ENCODE measurements at regions of chr9 and their contacts with region 1.

Region 1: DNA sequence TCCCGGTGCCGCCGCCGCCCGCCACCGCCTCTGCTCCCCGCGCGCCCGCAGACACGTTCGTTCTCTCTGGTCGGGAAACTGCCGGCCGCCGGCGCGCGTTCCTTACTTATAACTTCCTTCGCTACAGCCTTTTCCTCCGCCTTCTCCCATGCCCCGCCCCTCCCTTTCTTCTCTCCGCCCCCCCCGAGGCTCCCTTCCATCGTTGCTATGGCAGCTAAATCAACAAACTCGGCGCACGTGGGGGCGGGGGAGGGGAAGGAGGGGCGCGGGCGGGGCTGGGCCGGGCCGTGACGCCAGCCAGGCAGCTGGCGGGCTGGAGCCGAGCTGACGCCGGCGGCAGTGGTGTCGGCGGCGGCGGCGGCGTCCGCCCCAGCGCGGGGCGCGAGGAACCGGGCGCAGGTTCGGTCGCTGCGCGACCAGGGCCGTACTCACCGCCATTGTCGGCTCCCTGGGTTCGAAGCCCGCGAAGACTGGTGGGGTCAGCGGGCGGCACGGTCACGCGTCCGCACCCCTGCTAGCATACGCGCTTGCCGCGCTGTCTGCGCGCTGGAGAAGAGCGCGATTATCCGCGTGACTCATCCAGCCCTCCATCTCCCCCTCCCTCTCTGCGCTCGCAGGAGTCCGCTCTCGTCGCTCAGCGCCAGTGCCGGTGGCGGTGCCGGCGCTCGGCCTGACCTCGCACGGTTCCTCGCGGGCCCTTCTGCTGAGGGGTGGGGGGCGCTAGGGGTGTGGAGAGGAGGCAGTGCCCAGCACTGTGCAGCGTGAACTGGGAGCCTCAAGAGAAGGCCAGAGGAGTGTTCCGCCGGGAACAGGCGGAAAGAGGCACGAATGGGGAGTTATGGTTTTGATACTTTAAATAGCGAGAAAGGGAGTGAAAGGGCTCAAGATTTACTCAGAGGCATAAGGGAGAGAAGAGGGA is at the start of gene KLF4:
- DNase-seq: peak; percentile 91 to 95 (median 95)
- H3K4me3 ChIP-seq: peak within 1 kb of the TSS; percentile 64
- H3K27ac ChIP-seq: peak within 1 kb of the TSS; percentile 69 to 83
- H3K4me1 ChIP-seq: peaks cover 2% of the 10 kb centered on the region
- H3K27me3 ChIP-seq: no peaks in the 10 kb centered on the region
- CTCF ChIP-seq: peak in 2 of 3 donors; percentile 14 to 45
- EP300 ChIP-seq: peak; percentile 27
- POLR2A ChIP-seq: peak; percentile 95
- total RNA-seq, gene KLF4: 29.2 to 138 (median 71.2) TPM

Region 2: GRCh38 chr9:107067739-107068416 is 422.1 kb before region 1 on chr9:
- intact Hi-C with region 1: no loop called
- DNase-seq: no peak
- H3K4me3 ChIP-seq: no peak overlapping the region
- H3K27ac ChIP-seq: no peak overlapping the region
- H3K4me1 ChIP-seq: no peaks in the 10 kb centered on the region
- H3K27me3 ChIP-seq: no peaks in the 10 kb centered on the region
- CTCF ChIP-seq: no peak
- EP300 ChIP-seq: no peak
- POLR2A ChIP-seq: no peak

Region 3: DNA sequence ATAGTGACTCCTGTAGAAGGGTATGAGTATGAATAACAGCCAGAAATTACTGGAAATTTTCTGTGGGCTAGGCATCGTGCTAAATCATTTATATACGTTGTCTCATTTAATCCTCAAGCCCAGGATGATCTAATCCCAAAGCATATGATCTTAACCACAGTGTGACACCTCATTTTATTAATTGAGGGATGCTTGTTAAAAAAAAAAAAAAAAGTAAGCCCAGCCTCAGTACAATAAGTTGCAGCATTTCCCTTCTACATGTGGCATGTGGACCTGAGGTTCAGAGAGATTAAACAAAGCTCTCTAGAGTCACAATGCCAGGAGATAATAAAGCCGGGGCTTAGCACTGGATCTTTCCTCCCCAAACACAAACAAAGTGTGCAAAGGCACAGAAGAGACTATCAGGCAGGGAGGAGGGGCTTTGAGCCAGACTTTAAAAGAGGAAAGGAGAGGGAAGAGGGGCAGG is 49.9 kb before region 1 on chr9:
- intact Hi-C with region 1: no loop called
- DNase-seq: no peak
- H3K4me3 ChIP-seq: no peak overlapping the region
- H3K27ac ChIP-seq: no peak overlapping the region
- H3K4me1 ChIP-seq: no peaks in the 10 kb centered on the region
- H3K27me3 ChIP-seq: no peaks in the 10 kb centered on the region
- CTCF ChIP-seq: no peak
- EP300 ChIP-seq: no peak
- POLR2A ChIP-seq: no peak

Region 4: GRCh38 chr9:107737987-107738743 is 248.2 kb after region 1 on chr9:
- intact Hi-C with region 1: loop called in 3 of 4 experiments (anchors 5 kb)
- DNase-seq: peak; percentile 68 to 75 (median 73)
- H3K4me3 ChIP-seq: no peak overlapping the region
- H3K27ac ChIP-seq: peak overlapping the region; percentile 18 to 82
- H3K4me1 ChIP-seq: peaks cover 44% of the 10 kb centered on the region
- H3K27me3 ChIP-seq: no peaks in the 10 kb centered on the region
- CTCF ChIP-seq: no peak
- EP300 ChIP-seq: no peak
- POLR2A ChIP-seq: peak; percentile 26

Region 5: DNA sequence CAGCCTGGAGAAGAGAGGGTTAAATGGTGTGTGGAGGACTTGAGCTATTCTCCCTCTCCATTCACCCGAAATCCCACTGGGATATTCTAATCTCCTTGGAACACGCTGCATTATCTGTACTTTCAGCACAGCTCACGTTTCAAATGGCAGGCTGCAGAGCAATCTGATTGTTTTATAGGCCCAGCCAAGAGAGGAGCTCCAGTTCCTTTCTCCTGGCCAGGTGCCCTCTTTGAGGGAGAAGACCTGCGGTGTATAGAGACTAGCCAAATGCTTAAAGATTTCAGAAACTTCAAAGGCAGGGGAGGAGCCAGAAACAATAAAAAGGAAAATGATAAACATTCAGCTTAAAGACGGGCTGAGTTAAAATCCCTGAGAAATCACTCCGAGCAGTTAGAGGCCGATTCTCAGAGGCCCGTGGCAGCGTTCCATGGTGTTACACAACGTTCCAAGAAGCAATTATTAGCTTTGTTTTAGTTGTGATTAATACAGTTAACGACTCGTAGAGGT is 563.7 kb after region 1 on chr9:
- intact Hi-C with region 1: loop called in 1 of 4 experiments (anchors 5 kb)
- DNase-seq: peak; percentile 84 to 91 (median 89)
- H3K4me3 ChIP-seq: no peak overlapping the region
- H3K27ac ChIP-seq: peak overlapping the region in 1 of 2 donors; percentile 63
- H3K4me1 ChIP-seq: peaks cover 18% of the 10 kb centered on the region
- H3K27me3 ChIP-seq: no peaks in the 10 kb centered on the region
- CTCF ChIP-seq: no peak
- EP300 ChIP-seq: no peak
- POLR2A ChIP-seq: no peak

Region 6: GRCh38 chr9:108272349-108272899 is 782.5 kb after region 1 on chr9:
- intact Hi-C with region 1: loop called in 2 of 4 experiments (anchors 10 kb)
- DNase-seq: peak; percentile 16 to 56 (median 36)
- H3K4me3 ChIP-seq: no peak overlapping the region
- H3K27ac ChIP-seq: peak overlapping the region in 1 of 2 donors; percentile 56
- H3K4me1 ChIP-seq: peaks cover 2% of the 10 kb centered on the region
- H3K27me3 ChIP-seq: no peaks in the 10 kb centered on the region
- CTCF ChIP-seq: peak in 1 of 3 donors; percentile 6
- EP300 ChIP-seq: no peak
- POLR2A ChIP-seq: no peak

Measured in ovary (tissue), 10 donors.